ENCODE measurements at regions of chrX and their contacts with region 1.

Region 1: GRCh38 chrX:41084044-41084892 is 977 bp upstream of the USP9X start:
- DNase-seq: peak; percentile 57 to 99
- ATAC-seq: peak; percentile 73 to 82
- H3K4me3 ChIP-seq: peak overlapping the region; percentile 89
- H3K27ac ChIP-seq: peak overlapping the region; percentile 91 to 96
- H3K4me1 ChIP-seq: peaks cover 32% of the 10 kb centered on the region
- CTCF ChIP-seq: no peak
- EP300 ChIP-seq: peak; percentile 48 to 75; a peak in 3 of 5 replicates
- POLR2A ChIP-seq: peak; percentile 77
- RAD21 ChIP-seq: peak in 1 of 2 experiments; percentile 20; a peak in 1 of 5 replicates

Region 2: GRCh38 chrX:40987413-40987812 is 96.9 kb before region 1 on chrX:
- CTCF ChIA-PET with region 1: no interaction called
- POLR2A ChIA-PET with region 1: interaction called, 10 read pairs
- DNase-seq: no peak
- ATAC-seq: no peak
- H3K4me3 ChIP-seq: no peak overlapping the region
- H3K27ac ChIP-seq: no peak overlapping the region
- H3K4me1 ChIP-seq: no peaks in the 10 kb centered on the region
- CTCF ChIP-seq: no peak
- EP300 ChIP-seq: no peak
- POLR2A ChIP-seq: no peak
- RAD21 ChIP-seq: no peak

Region 3: GRCh38 chrX:41010188-41010846 is 74.0 kb before region 1 on chrX:
- CTCF ChIA-PET with region 1: no interaction called
- POLR2A ChIA-PET with region 1: interaction called, 26 read pairs
- DNase-seq: peak; percentile 47 to 79
- ATAC-seq: peak; percentile 87 to 92
- H3K4me3 ChIP-seq: peak overlapping the region; percentile 24; the same call in 1 of the 3 replicates
- H3K27ac ChIP-seq: peak overlapping the region; percentile 88 to 92
- H3K4me1 ChIP-seq: peaks cover 36% of the 10 kb centered on the region
- CTCF ChIP-seq: no peak
- EP300 ChIP-seq: no peak
- POLR2A ChIP-seq: peak; percentile 27
- RAD21 ChIP-seq: peak; percentile 5 to 21; a peak in 1 of 5 replicates

Region 4: GRCh38 chrX:41027431-41027831 is 56.8 kb before region 1 on chrX:
- CTCF ChIA-PET with region 1: interaction called, 4 read pairs
- POLR2A ChIA-PET with region 1: interaction called, 50 read pairs
- DNase-seq: peak; percentile 48 to 90
- ATAC-seq: peak; percentile 72 to 75
- H3K4me3 ChIP-seq: peak overlapping the region; percentile 25; the same call in 1 of the 3 replicates
- H3K27ac ChIP-seq: peak overlapping the region; percentile 89 to 91
- H3K4me1 ChIP-seq: peaks cover 55% of the 10 kb centered on the region
- CTCF ChIP-seq: no peak
- EP300 ChIP-seq: peak in 1 of 2 experiments; percentile 11; a peak in 1 of 5 replicates
- POLR2A ChIP-seq: no peak
- RAD21 ChIP-seq: no peak

Region 5: GRCh38 chrX:41045960-41046567 is 38.2 kb before region 1 on chrX:
- CTCF ChIA-PET with region 1: no interaction called
- POLR2A ChIA-PET with region 1: interaction called, 12 read pairs
- DNase-seq: peak in 1 of 2 experiments; percentile 48
- ATAC-seq: peak; percentile 64 to 82
- H3K4me3 ChIP-seq: no peak overlapping the region
- H3K27ac ChIP-seq: peak overlapping the region; percentile 69 to 81
- H3K4me1 ChIP-seq: peaks cover 47% of the 10 kb centered on the region
- CTCF ChIP-seq: no peak
- EP300 ChIP-seq: no peak; a peak in 1 of 5 replicates
- POLR2A ChIP-seq: no peak
- RAD21 ChIP-seq: no peak; a peak in 1 of 5 replicates

Region 6: DNA sequence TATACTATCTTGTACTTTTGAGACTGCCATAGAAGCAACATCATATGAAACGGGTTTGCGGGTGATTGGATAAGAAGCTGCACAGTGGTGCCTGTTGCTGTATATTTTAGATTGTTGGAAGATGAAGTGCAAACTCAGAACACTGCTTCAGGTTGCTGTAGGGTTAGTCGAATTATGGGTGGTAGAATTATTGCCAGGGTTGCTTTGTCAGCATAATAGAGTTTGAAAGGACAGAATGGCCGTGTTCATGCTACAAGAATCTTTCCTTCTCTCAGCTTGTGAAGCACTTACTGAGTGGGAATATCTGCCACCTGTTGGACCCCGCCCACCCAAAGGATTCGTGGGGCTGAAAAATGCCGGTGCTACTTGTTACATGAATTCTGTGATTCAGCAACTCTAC is 116.5 kb after region 1 on chrX:
- CTCF ChIA-PET with region 1: no interaction called
- POLR2A ChIA-PET with region 1: no interaction called
- DNase-seq: no peak
- ATAC-seq: no peak
- H3K4me3 ChIP-seq: no peak overlapping the region
- H3K27ac ChIP-seq: no peak overlapping the region
- H3K4me1 ChIP-seq: no peaks in the 10 kb centered on the region
- CTCF ChIP-seq: no peak
- EP300 ChIP-seq: no peak
- POLR2A ChIP-seq: no peak
- RAD21 ChIP-seq: no peak

Region 7: GRCh38 chrX:41441934-41442823 is 357.9 kb after region 1 on chrX:
- CTCF ChIA-PET with region 1: no interaction called
- POLR2A ChIA-PET with region 1: no interaction called
- DNase-seq: peak; percentile 76 to 94
- ATAC-seq: peak; percentile 94
- H3K4me3 ChIP-seq: peak overlapping the region; percentile 36
- H3K27ac ChIP-seq: peak overlapping the region; percentile 90 to 97
- H3K4me1 ChIP-seq: peaks cover 17% of the 10 kb centered on the region
- CTCF ChIP-seq: peak; percentile 71
- EP300 ChIP-seq: peak in 1 of 2 experiments; percentile 38; a peak in 1 of 5 replicates
- POLR2A ChIP-seq: peak; percentile 63
- RAD21 ChIP-seq: peak; percentile 53 to 90

Measured in A549 (cell line).